Left ventricle myocardium inferior (tissue), 1 donor: ENCODE measurements at regions of chr18 and their contacts with region 1.

Region 1: DNA sequence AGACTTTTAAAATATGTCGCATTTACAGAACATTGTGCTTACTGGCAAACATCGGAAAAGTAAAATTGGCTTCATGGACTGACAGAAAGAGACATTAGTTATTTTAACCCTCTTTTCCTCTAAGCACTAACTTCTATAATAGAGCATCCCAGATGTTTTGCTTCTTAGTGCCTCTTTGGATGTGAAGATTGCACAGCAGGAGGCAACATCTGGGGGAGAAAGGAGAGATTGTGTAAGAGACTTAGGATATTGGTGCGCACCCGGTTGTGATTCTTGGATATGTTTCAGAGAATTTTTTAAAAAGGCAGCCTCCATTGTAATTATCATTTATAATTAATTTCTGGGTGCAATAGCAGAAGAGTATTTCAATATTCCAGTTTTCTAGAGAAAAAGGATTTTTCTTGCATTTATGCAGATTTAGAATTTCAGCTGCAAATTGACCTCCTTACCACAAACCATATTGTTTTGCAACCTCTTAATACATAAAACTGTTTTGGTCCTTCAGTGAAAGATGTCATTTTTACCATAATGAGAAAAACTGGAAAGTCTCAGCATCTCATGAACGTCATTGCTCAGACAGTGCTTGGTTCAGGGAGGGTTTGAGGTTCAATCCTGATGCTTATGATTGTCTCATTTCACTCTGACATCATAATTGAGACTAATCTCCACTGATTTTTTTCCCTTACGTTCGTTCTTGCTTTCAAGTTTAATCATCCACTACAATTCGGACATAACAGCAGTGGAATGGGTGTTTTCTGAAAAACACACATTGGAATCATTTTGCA is 404.3 kb downstream of the ZNF521 start:
- DNase-seq: no peak
- H3K4me3 ChIP-seq: no peak overlapping the region
- H3K27ac ChIP-seq: peak overlapping the region; percentile 30
- H3K4me1 ChIP-seq: no peaks in the 10 kb centered on the region
- H3K27me3 ChIP-seq: no peaks in the 10 kb centered on the region
- CTCF ChIP-seq: no peak

Region 2: DNA sequence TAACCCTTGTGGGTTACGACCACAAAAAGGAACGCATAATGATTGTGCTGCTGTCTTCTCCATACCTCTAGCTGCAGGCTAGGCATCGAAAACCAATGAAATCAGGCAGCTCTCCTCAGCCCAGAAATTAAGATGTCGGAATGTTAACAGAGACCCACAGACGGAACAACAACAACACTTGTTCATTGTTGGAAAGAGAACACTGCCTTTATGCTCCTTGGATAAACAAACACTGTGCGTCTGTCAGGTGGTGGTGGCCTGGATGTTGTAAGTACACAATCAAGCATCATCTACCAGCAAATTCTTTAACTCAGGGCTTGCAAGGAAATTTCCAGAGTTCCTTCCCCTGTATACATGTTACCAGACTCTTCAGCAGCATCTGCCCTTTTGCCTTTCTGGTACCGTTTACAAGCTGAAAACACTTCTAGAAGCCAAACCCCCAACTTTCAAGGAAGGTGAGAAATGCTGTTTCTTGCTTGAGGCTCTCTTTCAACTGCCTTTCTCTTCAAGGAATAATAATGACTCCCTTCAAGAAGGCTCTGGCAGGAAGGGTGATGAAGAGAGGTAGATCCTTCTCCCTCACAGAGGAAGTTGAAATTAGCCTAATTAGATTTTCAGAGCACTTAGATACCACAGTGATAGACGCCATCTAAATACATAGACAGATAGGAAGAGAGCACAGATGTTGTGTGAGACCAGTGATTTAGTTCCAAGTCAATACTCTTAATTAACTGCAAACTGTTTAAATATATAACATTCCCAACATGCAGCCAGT is 71.6 kb after region 1 on chr18:
- intact Hi-C with region 1: loop called (anchors 10 kb)
- DNase-seq: no peak
- H3K4me3 ChIP-seq: no peak overlapping the region
- H3K27ac ChIP-seq: no peak overlapping the region
- H3K4me1 ChIP-seq: no peaks in the 10 kb centered on the region
- H3K27me3 ChIP-seq: no peaks in the 10 kb centered on the region
- CTCF ChIP-seq: no peak

Region 3: GRCh38 chr18:25289001-25289631 is 341.4 kb after region 1 on chr18:
- intact Hi-C with region 1: no loop called
- DNase-seq: no peak
- H3K4me3 ChIP-seq: no peak overlapping the region
- H3K27ac ChIP-seq: peak overlapping the region; percentile 87
- H3K4me1 ChIP-seq: peaks cover 53% of the 10 kb centered on the region
- H3K27me3 ChIP-seq: no peaks in the 10 kb centered on the region
- CTCF ChIP-seq: no peak